ENCODE measurements at regions of chr22 and their contacts with region 1.

Region 1: DNA sequence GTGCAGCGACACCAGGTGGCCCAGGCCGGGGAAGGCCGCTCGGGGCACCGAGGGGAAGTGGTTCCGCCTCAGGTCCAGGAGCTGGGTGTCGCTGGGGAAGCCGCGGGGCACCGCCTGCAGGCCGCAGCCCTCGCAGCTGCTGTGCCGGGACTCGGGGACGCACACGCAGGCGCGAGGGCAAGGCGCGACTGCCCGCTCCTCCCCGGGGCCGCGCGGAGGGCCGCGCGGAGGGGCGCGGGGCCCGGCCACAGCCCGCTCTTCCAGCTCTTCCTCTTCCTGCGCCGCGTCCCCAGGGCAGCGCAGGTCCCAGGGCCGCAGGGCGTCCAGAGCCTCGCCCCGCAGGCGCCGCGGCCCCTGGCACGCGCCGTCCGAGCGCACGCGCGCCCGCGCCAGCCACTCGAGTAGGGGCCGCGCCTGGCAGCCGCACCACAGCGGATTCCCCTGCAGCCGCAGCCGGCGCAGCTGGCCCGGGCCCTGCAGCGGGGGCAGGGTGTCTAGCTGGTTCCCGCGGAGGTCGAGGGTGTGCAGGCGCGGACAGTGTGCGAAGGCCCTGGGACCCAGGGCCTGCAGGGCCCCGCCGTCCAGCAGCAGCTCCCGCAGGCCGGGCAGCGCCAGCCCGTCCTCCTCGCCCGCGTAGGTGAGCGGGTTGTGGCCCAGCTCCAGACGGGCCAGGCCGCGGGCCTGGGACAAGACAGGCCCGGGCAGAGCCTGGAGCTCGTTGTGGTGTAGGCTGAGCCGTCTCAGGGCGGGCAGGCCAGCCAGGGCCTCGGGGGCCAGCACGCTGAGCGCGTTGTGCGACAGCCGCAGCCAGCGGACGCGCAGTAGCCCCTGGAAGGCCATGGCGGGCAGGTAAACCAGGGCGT is 2.8 kb downstream of the CHADL start:
- DNase-seq: peak; percentile 89
- ATAC-seq: peak; percentile 97
- H3K4me3 Mint-ChIP-seq: peak overlapping the region; percentile 59
- H3K27ac Mint-ChIP-seq: no peak overlapping the region
- H3K4me1 Mint-ChIP-seq: peaks cover 8% of the 10 kb centered on the region
- H3K27me3 Mint-ChIP-seq: peaks cover 3% of the 10 kb centered on the region

Region 2: GRCh38 chr22:40928657-40929056 is 309.3 kb before region 1 on chr22:
- CTCF ChIA-PET with region 1: interaction called, 137 read pairs
- DNase-seq: no peak
- ATAC-seq: no peak
- H3K4me3 Mint-ChIP-seq: no peak overlapping the region
- H3K27ac Mint-ChIP-seq: no peak overlapping the region
- H3K4me1 Mint-ChIP-seq: no peaks in the 10 kb centered on the region
- H3K27me3 Mint-ChIP-seq: no peaks in the 10 kb centered on the region

Region 3: GRCh38 chr22:41171996-41172395 is 65.9 kb before region 1 on chr22:
- CTCF ChIA-PET with region 1: interaction called, 10 read pairs
- DNase-seq: no peak
- ATAC-seq: no peak
- H3K4me3 Mint-ChIP-seq: no peak overlapping the region
- H3K27ac Mint-ChIP-seq: no peak overlapping the region
- H3K4me1 Mint-ChIP-seq: peaks cover 6% of the 10 kb centered on the region
- H3K27me3 Mint-ChIP-seq: no peaks in the 10 kb centered on the region

Region 4: GRCh38 chr22:41206719-41207118 is 31.2 kb before region 1 on chr22:
- CTCF ChIA-PET with region 1: interaction called, 15 read pairs
- DNase-seq: no peak
- ATAC-seq: no peak
- H3K4me3 Mint-ChIP-seq: peak overlapping the region; percentile 58
- H3K27ac Mint-ChIP-seq: peak overlapping the region; percentile 18
- H3K4me1 Mint-ChIP-seq: peaks cover 27% of the 10 kb centered on the region
- H3K27me3 Mint-ChIP-seq: peaks cover 9% of the 10 kb centered on the region

Region 5: DNA sequence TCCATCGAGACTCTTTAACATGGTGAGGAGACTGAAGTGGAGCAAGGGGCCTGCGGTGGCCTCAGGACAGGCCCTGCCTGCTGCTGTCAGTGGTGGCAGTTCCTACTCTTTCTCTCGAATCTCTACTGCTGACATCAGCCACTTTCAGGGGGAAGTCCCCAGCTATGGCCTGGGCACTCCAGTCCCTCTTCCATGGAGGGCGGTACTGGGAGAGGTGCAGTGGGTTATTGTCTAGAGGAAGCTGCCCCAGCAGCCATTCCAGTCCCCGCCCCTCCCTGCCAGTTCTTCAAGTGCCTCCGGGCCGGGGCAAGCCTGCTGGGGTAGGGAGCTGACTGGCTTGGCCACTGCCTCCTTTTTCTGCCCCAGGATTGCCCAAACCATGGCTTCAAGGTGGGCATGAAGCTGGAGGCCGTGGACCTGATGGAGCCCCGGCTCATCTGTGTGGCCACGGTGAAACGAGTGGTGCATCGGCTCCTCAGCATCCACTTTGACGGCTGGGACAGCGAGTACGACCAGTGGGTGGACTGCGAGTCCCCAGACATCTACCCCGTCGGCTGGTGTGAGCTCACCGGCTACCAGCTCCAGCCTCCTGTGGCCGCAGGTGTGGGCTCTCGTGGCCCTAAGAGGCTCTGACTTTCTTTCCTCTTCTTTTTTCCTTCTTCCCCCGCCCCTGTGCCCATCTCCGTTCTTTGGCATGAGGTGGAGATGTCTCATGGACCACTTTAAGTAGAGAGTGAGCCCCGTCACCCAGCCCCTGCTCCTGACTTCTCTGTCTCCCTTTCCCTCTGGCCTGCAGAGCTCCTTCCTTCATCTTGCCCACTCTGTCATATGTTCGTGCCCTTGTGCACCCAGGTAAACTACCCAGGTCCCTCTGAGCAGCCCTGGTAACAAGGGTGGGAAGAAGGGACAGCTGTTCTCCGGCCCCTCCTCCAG is 10.9 kb before region 1 on chr22:
- CTCF ChIA-PET with region 1: interaction called, 14 read pairs
- DNase-seq: no peak
- ATAC-seq: no peak
- H3K4me3 Mint-ChIP-seq: no peak overlapping the region
- H3K27ac Mint-ChIP-seq: no peak overlapping the region
- H3K4me1 Mint-ChIP-seq: no peaks in the 10 kb centered on the region
- H3K27me3 Mint-ChIP-seq: no peaks in the 10 kb centered on the region

Region 6: DNA sequence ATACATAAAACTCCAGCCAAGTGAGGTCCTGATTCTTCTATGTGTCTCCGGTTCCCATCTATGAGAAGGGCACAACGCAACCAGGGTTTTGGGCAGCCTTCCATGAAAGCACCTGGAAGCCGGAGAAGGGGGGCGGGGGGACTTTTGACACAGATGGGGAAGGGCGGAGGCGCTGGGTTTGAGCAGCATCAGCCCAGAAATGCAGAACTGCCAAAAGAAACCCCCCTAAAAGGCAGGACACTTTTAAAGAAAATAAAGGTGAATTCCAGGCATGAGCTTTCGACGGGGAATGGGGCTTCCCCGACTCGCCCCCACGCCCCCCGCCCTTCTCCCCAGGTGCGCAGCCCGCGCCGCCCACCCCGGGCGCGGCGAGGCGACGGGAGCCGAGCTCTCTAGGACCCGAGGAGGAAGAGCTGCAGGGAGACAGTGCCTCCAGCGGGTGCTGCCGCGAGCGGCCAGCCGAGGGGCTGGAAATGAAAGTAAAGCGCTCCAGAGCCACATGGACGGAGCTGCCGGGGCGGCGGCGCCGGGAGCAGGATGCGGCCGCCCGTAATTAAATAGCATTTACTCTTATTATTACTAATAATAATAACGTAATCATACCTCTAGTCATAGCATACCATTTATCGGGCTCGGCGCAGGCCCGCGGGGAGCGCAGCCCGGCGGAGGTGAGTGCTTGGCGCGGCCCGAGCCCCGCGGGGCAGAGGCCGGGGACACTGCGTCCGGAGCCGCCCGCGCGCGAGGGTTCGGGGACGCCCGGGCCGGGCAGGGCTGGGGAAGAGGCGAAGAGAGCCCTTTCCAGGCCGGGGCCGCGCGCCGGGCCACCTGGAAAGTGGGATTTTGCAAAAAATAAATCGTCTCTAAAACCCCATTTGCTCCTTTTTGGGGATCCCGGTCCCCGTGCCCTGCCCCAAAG is 63.4 kb after region 1 on chr22 and contains the start of gene ZC3H7B:
- CTCF ChIA-PET with region 1: interaction called, 13 read pairs
- DNase-seq: peak; percentile 92
- ATAC-seq: peak; percentile 99
- H3K4me3 Mint-ChIP-seq: peak within 1 kb of the TSS; percentile 73
- H3K27ac Mint-ChIP-seq: peak within 1 kb of the TSS; percentile 77
- H3K4me1 Mint-ChIP-seq: peaks cover 31% of the 10 kb centered on the region
- H3K27me3 Mint-ChIP-seq: no peaks in the 10 kb centered on the region
- total RNA-seq, gene ZC3H7B: 56.3 to 62.4 TPM

Region 7: DNA sequence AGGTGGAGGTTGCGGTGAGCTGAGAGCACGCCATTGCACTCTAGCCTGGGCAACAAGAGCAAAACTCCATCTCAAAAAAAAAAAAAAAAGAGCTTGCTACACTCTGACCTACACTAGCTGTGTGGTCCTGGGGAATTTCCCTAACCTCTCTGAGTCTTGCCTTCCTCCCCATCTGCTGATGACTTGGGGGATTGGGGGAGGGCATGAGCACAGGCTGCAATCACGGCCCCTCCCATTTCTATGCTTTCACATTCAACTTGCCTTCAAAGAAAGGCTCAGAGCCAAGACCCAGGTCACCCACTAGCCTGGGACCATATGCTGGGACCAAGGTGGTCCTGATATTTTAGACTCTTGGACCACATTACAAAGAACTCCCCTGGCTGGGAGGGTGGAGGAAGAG is 104.1 kb after region 1 on chr22:
- CTCF ChIA-PET with region 1: no interaction called
- DNase-seq: peak; percentile 53
- ATAC-seq: peak; percentile 78
- H3K4me3 Mint-ChIP-seq: no peak overlapping the region
- H3K27ac Mint-ChIP-seq: peak overlapping the region; percentile 61
- H3K4me1 Mint-ChIP-seq: peaks cover 20% of the 10 kb centered on the region
- H3K27me3 Mint-ChIP-seq: no peaks in the 10 kb centered on the region